ENCODE measurements at regions of chr5 and their contacts with region 1.

Region 1: DNA sequence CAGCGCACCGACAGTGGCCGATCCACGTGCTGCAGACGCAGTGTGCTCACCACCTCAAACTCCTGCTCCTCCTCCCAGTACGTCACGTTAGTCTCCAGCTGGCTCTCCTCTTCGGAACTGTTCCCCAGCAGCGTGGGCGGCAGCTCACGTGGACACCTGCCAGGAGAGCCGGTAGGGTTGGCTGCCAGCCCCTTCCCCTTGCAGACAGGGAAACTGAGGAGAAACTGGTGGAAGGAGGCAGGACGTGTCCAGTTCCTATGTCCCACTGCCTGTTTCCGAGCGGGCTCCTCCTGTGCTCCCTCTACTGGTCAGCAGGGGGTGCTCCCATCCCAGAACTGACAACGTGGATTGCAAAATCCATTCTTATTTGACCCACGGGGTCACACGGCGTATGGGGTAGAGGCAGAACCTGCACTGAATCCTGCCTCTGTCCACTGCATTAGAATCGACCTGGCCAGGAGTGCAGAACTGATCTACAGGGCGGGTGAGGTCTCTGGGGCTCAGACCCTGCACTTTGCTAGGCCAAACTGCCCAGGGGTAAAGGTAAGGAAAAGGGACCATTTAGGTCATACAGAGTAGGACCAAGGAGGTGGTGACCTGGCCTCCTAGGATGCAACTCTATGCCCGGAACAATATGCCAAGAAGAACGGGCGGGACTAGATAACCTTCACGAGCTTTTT is 25.7 kb downstream of the PDGFRB start:
- DNase-seq: peak; percentile 65
- H3K4me3 ChIP-seq: no peak overlapping the region
- H3K27ac ChIP-seq: no peak overlapping the region
- H3K4me1 ChIP-seq: peaks cover 14% of the 10 kb centered on the region
- H3K27me3 ChIP-seq: peaks cover 0 to 5% of the 10 kb centered on the region in 2 experiments
- CTCF ChIP-seq: peak; percentile 89 to 93
- POLR2A ChIP-seq: no peak

Region 2: GRCh38 chr5:149834246-149834855 is 295.6 kb before region 1 on chr5:
- CTCF ChIA-PET with region 1: interaction called, 3 read pairs
- POLR2A ChIA-PET with region 1: no interaction called
- dilution Hi-C with region 1: no loop called
- intact Hi-C with region 1: loop called (anchors 2 kb)
- DNase-seq: peak; percentile 86
- H3K4me3 ChIP-seq: no peak overlapping the region
- H3K27ac ChIP-seq: no peak overlapping the region
- H3K4me1 ChIP-seq: peaks cover 1% of the 10 kb centered on the region
- H3K27me3 ChIP-seq: no peaks in the 10 kb centered on the region
- CTCF ChIP-seq: peak; percentile 79 to 80
- POLR2A ChIP-seq: no peak

Region 3: GRCh38 chr5:150000256-150000989 is 129.5 kb before region 1 on chr5 and contains the starts of genes HMGXB3 and TIGD6:
- CTCF ChIA-PET with region 1: no interaction called
- POLR2A ChIA-PET with region 1: no interaction called
- dilution Hi-C with region 1: no loop called
- intact Hi-C with region 1: loop called (anchors 5 kb)
- DNase-seq: peak; percentile 94
- H3K4me3 ChIP-seq: peak within 1 kb of the TSS; percentile 42 to 97 (median 86)
- H3K27ac ChIP-seq: peak within 1 kb of the TSS; percentile 72
- H3K4me1 ChIP-seq: peaks cover 23% of the 10 kb centered on the region
- H3K27me3 ChIP-seq: no peaks in the 10 kb centered on the region
- CTCF ChIP-seq: peak in 1 of 2 donors; percentile 8
- POLR2A ChIP-seq: peak; percentile 96
- total RNA-seq, gene HMGXB3: 43.0 and 52.6 TPM in 2 replicates
- total RNA-seq, gene TIGD6: 3.6 and 4.1 TPM in 2 replicates

Region 4: GRCh38 chr5:150155258-150156026 is 25.5 kb after region 1 on chr5 and contains the start of gene PDGFRB:
- CTCF ChIA-PET with region 1: interaction called, 5 read pairs
- POLR2A ChIA-PET with region 1: no interaction called
- dilution Hi-C with region 1: no loop called
- intact Hi-C with region 1: loop called (anchors 1 kb)
- DNase-seq: peak; percentile 56
- H3K4me3 ChIP-seq: peak within 1 kb of the TSS in 2 of 3 experiments; percentile 14 to 26
- H3K27ac ChIP-seq: no peak within 1 kb of the TSS
- H3K4me1 ChIP-seq: peaks cover 5% of the 10 kb centered on the region
- H3K27me3 ChIP-seq: peaks cover 0 to 5% of the 10 kb centered on the region in 2 experiments
- CTCF ChIP-seq: no peak
- POLR2A ChIP-seq: no peak
- total RNA-seq, gene PDGFRB: 1.0 and 1.7 TPM in 2 replicates

Region 5: GRCh38 chr5:150161242-150162141 is 31.5 kb after region 1 on chr5:
- CTCF ChIA-PET with region 1: interaction called, 4 read pairs
- POLR2A ChIA-PET with region 1: no interaction called
- dilution Hi-C with region 1: no loop called
- intact Hi-C with region 1: loop called (anchors 1 kb)
- DNase-seq: peak; percentile 59
- H3K4me3 ChIP-seq: no peak overlapping the region
- H3K27ac ChIP-seq: no peak overlapping the region
- H3K4me1 ChIP-seq: no peaks in the 10 kb centered on the region
- H3K27me3 ChIP-seq: peaks cover 6 to 7% of the 10 kb centered on the region in 2 experiments
- CTCF ChIP-seq: peak; percentile 94 to 97
- POLR2A ChIP-seq: no peak

Region 6: DNA sequence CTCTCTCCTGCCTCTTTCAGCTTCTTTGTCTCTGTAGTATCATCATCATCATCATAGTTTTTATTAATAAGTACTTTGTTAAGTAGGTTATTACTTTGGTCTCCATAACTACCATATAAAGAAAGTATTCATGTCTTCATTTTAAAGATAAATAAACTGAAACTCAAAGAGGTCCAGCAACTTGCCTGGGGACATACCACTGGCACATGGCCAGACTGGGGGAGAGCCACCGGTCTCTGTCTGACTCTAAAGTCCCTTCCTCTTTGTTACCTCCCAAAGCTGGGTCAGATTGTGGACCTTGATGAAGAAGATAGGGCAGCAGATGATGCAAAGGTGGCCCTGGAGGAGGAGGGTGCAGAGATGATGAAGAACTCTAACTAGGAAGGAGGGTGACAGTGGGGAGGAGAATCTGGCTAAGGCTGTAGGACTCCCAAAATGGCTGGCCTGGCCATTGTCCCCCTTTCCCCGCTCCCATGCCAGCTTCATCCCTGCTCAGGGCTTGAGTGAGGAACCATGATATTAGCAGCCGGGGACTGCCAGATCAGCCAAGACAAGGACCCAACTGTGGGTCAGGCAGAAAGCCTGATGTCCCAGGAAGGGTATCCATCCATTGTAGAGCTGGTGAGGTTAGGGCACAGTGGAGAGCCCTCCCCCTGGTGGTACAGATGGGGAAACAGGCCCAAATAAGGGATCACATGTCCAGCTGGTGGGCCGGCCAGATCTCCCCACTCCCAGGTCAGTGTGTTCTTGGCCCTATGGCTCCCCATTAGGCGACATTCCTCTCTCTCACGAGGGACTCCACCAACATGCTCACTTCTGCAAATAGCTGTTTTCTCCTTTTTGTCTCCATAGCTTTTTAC is 45.4 kb after region 1 on chr5:
- CTCF ChIA-PET with region 1: interaction called, 27 read pairs
- POLR2A ChIA-PET with region 1: no interaction called
- dilution Hi-C with region 1: no loop called
- intact Hi-C with region 1: loop called (anchors 1 kb)
- DNase-seq: peak; percentile 34
- H3K4me3 ChIP-seq: no peak overlapping the region
- H3K27ac ChIP-seq: no peak overlapping the region
- H3K4me1 ChIP-seq: no peaks in the 10 kb centered on the region
- H3K27me3 ChIP-seq: peaks cover 7 to 11% of the 10 kb centered on the region in 2 experiments
- CTCF ChIP-seq: peak; percentile 48 to 77
- POLR2A ChIP-seq: no peak

Region 7: GRCh38 chr5:150350524-150351344 is 220.8 kb after region 1 on chr5:
- CTCF ChIA-PET with region 1: no interaction called
- POLR2A ChIA-PET with region 1: no interaction called
- dilution Hi-C with region 1: no loop called
- intact Hi-C with region 1: loop called (anchors 1 kb)
- DNase-seq: peak; percentile 49
- H3K4me3 ChIP-seq: no peak overlapping the region
- H3K27ac ChIP-seq: no peak overlapping the region
- H3K4me1 ChIP-seq: no peaks in the 10 kb centered on the region
- H3K27me3 ChIP-seq: no peaks in the 10 kb centered on the region
- CTCF ChIP-seq: peak; percentile 51 to 56
- POLR2A ChIP-seq: no peak

Measured in endothelial cell of umbilical vein (primary cell).